Esophagus squamous epithelium (tissue), 5 donors: ENCODE measurements at regions of chr5 and their contacts with region 1.

Region 1: GRCh38 chr5:16934123-16934522 is 2.0 kb downstream of the MYO10 start:
- DNase-seq: no peak
- H3K4me3 ChIP-seq: peak overlapping the region; percentile 82 to 83 (median 83)
- H3K27ac ChIP-seq: no peak overlapping the region
- H3K4me1 ChIP-seq: peaks cover 0 to 67% (median 17%) of the 10 kb centered on the region in 3 donors
- H3K27me3 ChIP-seq: peaks cover 0 to 30% (median 0%) of the 10 kb centered on the region in 4 donors
- CTCF ChIP-seq: peak in 5 of 6 experiments; percentile 69 to 83 (median 74)
- POLR2A ChIP-seq: no peak

Region 2: DNA sequence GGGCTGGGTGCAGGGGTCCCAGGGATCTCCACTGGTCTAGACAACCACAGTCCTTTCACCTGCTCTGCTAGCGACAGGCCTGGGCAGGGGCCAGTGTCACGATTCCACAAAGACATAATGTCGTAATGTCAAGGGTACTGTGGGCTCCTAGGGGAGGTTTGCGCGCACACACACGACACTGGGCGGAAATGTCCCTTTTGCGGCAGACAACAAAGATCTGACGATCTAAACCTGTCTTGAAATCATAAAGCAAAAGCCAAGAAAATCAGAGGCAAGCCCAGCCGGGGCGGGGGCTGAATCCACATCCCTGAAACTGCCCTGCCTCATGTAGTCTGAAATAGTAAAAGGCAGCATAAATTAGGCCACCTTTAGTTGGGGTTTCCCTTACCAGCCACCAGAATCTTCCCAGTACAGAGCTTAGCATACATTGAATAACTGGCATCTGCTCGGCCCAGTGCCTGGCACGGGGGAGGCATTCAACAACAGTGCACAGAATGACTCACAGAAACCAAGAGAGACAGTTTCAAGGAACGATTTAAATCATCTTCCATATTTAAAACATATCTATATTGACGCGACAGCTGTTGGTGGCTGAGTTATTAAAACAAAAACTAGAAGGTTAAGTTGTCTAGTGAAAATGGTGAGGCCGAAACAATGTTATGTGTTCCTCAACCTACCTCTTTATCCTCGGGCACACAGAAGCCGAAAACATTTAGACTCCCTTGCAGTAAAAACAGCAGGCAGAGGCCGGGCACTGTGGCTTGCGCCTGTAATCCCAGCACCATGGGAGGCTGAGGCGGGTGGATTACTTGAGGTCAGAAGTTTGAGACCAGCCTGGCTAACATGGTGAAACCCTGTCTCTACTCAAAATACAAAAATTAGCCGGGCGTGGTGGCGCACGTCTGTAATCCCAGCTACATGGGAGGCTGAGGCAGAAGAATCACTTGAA is 149.0 kb before region 1 on chr5:
- intact Hi-C with region 1: loop called (anchors 10 kb)
- DNase-seq: no peak
- H3K4me3 ChIP-seq: no peak overlapping the region
- H3K27ac ChIP-seq: no peak overlapping the region
- H3K4me1 ChIP-seq: peaks cover 0 to 12% (median 0%) of the 10 kb centered on the region in 3 donors
- H3K27me3 ChIP-seq: no peaks in the 10 kb centered on the region
- CTCF ChIP-seq: no peak
- POLR2A ChIP-seq: no peak

Region 3: DNA sequence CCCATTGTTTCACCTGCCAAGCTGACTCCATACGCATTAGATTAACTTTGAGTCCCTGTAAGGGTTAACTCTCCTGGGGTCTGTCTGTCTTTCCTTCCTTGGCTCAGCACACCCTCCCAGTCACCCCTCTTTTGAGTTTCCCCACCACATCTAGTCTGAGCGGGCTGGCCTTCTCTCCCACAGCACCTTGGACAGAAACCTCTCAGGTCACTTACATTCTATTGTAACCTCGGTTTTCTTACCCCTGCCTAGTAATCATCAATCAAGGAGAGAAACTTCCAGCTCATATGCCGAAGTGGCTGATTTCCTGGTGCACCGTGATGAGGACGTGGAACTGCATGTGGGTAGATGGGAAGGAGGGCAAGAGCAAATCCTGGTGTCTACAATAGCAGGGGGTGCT is 100.1 kb before region 1 on chr5:
- intact Hi-C with region 1: no loop called
- DNase-seq: no peak
- H3K4me3 ChIP-seq: no peak overlapping the region
- H3K27ac ChIP-seq: no peak overlapping the region
- H3K4me1 ChIP-seq: no peaks in the 10 kb centered on the region
- H3K27me3 ChIP-seq: no peaks in the 10 kb centered on the region
- CTCF ChIP-seq: no peak
- POLR2A ChIP-seq: no peak

Region 4: DNA sequence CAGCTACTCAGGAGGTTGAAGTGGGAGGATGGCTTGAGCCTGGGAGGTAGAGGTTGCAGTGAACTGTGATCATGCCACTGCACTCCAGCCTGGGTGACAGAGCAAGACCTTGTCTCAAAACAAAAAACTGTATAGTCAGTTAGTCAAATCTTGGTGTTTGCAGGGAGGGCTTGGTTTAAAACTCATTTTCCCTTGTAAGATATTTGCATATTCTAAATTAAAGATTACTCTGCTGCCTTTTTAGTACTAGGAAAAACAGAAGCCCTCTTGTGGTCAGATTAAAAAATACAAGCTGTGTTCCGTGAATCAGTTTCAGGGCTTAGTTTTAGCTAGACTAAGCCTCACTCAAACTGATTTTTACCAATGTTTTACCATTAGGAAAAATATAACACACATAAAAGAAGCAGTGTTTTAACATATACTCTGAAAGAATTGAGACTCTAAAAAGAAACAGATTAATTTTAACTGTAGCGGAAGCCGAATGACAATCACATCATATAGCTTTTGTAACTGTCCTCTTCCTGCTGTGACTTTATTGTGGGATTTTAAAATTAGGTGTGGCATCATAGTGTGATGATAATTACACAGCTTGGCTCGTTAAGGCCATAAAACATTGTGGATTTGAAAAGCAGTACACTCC is 198.4 kb after region 1 on chr5:
- intact Hi-C with region 1: loop called (anchors 10 kb)
- DNase-seq: no peak
- H3K4me3 ChIP-seq: no peak overlapping the region
- H3K27ac ChIP-seq: no peak overlapping the region
- H3K4me1 ChIP-seq: no peaks in the 10 kb centered on the region
- H3K27me3 ChIP-seq: peaks cover 0 to 12% (median 0%) of the 10 kb centered on the region in 4 donors
- CTCF ChIP-seq: peak; percentile 12 to 73 (median 56)
- POLR2A ChIP-seq: no peak